HepG2 (cell line): ENCODE measurements at regions of chr21 and their contacts with region 1.

Region 1: GRCh38 chr21:14403681-14404318 is 20.9 kb upstream of the HSPA13 start:
- DNase-seq: peak; percentile 19
- ATAC-seq: peak; percentile 64
- H3K4me3 ChIP-seq: no peak overlapping the region
- H3K27ac ChIP-seq: no peak overlapping the region
- H3K4me1 ChIP-seq: no peaks in the 10 kb centered on the region
- H3K27me3 ChIP-seq: no peaks in the 10 kb centered on the region; a peak in 1 of 5 replicates
- CTCF ChIP-seq: peak; percentile 59
- EP300 ChIP-seq: no peak
- POLR2A ChIP-seq: no peak
- RAD21 ChIP-seq: 0 out of 2 replicates have a peak, but pooled peaks have one; percentile 19

Region 2: DNA sequence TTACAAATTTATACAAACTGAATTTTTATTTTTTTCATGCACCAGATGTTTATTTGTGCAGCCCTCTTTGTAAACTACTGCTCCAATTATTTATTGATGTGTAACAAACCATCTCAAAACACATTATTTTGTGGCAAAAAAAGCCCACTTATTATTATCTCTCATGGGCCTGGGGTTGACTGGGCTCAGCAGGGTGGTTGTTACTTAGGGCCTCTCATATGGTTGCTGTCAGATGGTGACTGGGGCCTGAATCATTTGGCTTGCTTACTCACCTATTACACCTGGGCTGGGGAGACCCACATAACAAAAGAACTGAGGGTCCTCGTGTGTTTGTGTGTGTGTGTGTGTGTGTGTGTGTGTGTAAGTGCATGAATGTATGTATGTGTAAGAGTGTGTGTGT is 31.6 kb after region 1 on chr21:
- CTCF ChIA-PET with region 1: no interaction called
- POLR2A ChIA-PET with region 1: no interaction called
- in situ Hi-C with region 1: no loop called
- intact Hi-C with region 1: no loop called
- DNase-seq: no peak
- ATAC-seq: no peak
- H3K4me3 ChIP-seq: no peak overlapping the region
- H3K27ac ChIP-seq: no peak overlapping the region
- H3K4me1 ChIP-seq: no peaks in the 10 kb centered on the region
- H3K27me3 ChIP-seq: no peaks in the 10 kb centered on the region
- CTCF ChIP-seq: no peak
- EP300 ChIP-seq: no peak
- POLR2A ChIP-seq: no peak
- RAD21 ChIP-seq: no peak

Region 3: DNA sequence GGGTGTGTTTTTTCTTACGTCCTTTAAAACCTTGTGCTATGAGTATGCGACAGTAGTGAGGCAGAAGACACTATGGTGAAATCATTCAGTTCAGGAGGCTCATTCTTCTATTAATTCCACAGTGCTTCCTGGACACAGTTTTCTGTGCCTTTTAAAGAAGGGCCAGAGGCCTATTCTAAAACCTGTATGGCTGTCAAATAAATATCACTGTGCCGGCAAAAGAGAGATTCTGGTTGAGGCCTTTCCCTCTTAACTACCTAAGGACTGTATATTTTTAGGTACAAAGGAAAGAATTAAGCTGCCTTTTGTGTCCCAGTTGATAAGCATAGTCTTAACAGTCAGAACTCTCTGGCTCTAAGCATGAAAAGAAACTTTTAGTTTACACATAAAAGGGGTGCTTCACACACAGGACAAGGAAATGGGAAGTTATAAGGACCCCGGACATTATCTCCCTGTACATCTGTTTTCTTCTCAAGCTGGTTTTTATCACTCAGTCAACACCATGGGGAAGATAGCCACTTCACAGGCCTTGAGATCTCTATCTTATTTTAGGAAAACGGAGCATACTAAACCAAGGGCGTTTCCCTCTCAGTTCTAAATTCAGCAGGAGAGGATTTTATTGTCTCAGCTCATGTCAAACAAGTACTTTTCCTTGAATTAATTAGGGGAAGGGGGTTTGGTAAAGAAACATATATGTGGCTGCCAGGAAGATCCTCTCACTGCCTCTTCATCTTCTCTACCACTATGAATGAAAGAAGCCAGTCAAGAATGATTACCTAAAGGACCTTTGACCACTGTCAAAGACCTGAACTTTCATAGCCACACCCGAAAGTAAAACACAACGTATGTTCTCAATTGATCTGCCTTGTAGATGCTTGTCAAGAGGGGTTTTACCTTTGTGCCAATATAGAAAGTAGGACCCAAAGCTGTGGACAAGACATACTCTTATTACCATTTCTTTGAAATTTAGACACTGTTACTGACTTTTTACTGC is 50.5 kb after region 1 on chr21:
- CTCF ChIA-PET with region 1: no interaction called
- POLR2A ChIA-PET with region 1: no interaction called
- in situ Hi-C with region 1: no loop called
- intact Hi-C with region 1: no loop called
- DNase-seq: no peak
- ATAC-seq: no peak
- H3K4me3 ChIP-seq: no peak overlapping the region
- H3K27ac ChIP-seq: no peak overlapping the region
- H3K4me1 ChIP-seq: no peaks in the 10 kb centered on the region
- H3K27me3 ChIP-seq: no peaks in the 10 kb centered on the region
- CTCF ChIP-seq: no peak
- EP300 ChIP-seq: no peak
- POLR2A ChIP-seq: no peak
- RAD21 ChIP-seq: no peak

Region 4: GRCh38 chr21:14737922-14738321 is 334.1 kb after region 1 on chr21:
- CTCF ChIA-PET with region 1: interaction called, 6 read pairs
- POLR2A ChIA-PET with region 1: no interaction called
- in situ Hi-C with region 1: no loop called
- intact Hi-C with region 1: loop called (anchors 2 kb)
- DNase-seq: peak; percentile 70
- ATAC-seq: peak; percentile 76
- H3K4me3 ChIP-seq: no peak overlapping the region
- H3K27ac ChIP-seq: no peak overlapping the region
- H3K4me1 ChIP-seq: no peaks in the 10 kb centered on the region
- H3K27me3 ChIP-seq: no peaks in the 10 kb centered on the region
- CTCF ChIP-seq: peak; percentile 63
- EP300 ChIP-seq: no peak
- POLR2A ChIP-seq: no peak
- RAD21 ChIP-seq: no peak

Region 5: GRCh38 chr21:15005391-15005790 is 601.6 kb after region 1 on chr21:
- CTCF ChIA-PET with region 1: no interaction called
- POLR2A ChIA-PET with region 1: no interaction called
- in situ Hi-C with region 1: no loop called
- intact Hi-C with region 1: no loop called
- DNase-seq: no peak
- ATAC-seq: no peak
- H3K4me3 ChIP-seq: no peak overlapping the region
- H3K27ac ChIP-seq: no peak overlapping the region
- H3K4me1 ChIP-seq: peaks cover 80% of the 10 kb centered on the region
- H3K27me3 ChIP-seq: no peaks in the 10 kb centered on the region
- CTCF ChIP-seq: no peak
- EP300 ChIP-seq: no peak
- POLR2A ChIP-seq: no peak
- RAD21 ChIP-seq: no peak